Heart left ventricle (tissue), 16 donors: ENCODE measurements at regions of chr18 and their contacts with region 1.

Region 1: DNA sequence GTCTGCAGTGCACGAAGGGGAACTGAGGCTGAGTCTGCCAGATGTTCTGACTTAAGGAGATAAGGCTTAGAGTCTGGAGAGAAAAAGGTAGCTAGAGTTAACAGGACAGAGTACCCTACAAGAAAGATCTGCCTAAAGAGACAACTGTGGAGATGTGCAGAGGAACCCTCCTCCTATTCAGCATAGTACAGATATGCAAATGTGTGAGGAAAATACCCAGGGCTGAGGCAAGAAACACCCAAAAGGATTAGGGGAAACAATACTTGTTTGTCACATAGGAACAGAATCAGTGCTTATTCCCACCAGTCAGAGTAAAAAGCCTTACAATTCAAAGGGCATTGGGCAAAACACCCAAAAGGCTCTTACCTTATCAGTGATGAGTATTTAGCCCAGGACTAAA is 67.8 kb downstream of the SS18 start:
- DNase-seq: no peak
- ATAC-seq: no peak
- H3K4me3 ChIP-seq: no peak overlapping the region
- H3K27ac ChIP-seq: no peak overlapping the region
- H3K4me1 ChIP-seq: no peaks in the 10 kb centered on the region
- H3K27me3 ChIP-seq: no peaks in the 10 kb centered on the region
- CTCF ChIP-seq: no peak
- POLR2A ChIP-seq: no peak

Region 2: GRCh38 chr18:25990473-25990872 is 32.1 kb before region 1 on chr18:
- intact Hi-C with region 1: loop called in 1 of 10 experiments (anchors 2 kb)
- DNase-seq: no peak
- ATAC-seq: no peak
- H3K4me3 ChIP-seq: no peak overlapping the region
- H3K27ac ChIP-seq: no peak overlapping the region
- H3K4me1 ChIP-seq: no peaks in the 10 kb centered on the region
- H3K27me3 ChIP-seq: no peaks in the 10 kb centered on the region
- CTCF ChIP-seq: no peak
- POLR2A ChIP-seq: no peak